Heart right ventricle (tissue), 16 donors: ENCODE measurements at regions of chr2 and their contacts with region 1.

Region 1: DNA sequence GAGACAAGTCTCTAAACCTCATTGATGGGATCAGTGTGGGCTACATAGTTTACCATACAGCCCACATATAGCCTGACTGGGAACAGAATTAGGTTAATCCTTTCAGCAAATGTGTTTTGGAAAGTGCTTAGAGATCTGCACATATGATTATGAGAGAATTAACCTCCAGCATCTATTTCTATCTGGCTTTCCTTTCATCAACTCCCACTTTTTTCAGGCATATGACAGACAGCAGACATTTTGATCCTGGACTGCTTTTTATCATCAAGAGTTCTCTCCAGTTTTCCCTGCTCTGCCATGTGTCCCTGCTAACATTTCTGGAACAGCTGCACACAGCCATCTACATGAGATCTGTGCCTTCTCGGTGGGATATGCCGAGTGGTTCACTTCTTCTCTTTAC is 139.5 kb upstream of the LRP1B start:
- DNase-seq: no peak
- ATAC-seq: no peak
- H3K4me3 ChIP-seq: no peak overlapping the region
- H3K27ac ChIP-seq: no peak overlapping the region
- H3K4me1 ChIP-seq: no peaks in the 10 kb centered on the region
- H3K27me3 ChIP-seq: no peaks in the 10 kb centered on the region
- CTCF ChIP-seq: no peak

Region 2: DNA sequence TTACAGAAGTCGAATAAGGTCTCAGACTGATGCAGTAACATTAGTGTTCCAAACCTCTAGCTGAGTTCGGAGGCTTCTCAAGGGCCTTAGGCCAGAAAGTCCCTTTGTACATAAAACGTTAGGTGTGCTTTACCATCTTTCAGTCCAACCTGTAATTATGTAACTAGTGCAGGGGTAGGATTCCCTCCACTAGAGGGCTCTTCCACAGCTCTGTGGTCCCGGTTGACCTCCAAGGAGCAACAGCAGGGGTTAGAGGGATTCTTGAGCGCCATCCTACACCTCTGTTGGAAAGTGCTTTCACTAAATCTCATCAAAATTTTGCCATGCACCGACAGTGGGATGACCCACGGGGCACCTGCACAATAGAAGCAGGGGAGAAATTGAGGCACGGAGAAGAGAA is 16.3 kb after region 1 on chr2:
- intact Hi-C with region 1: loop called in 1 of 10 experiments (anchors 2 kb)
- DNase-seq: no peak
- ATAC-seq: no peak
- H3K4me3 ChIP-seq: no peak overlapping the region
- H3K27ac ChIP-seq: no peak overlapping the region
- H3K4me1 ChIP-seq: no peaks in the 10 kb centered on the region
- H3K27me3 ChIP-seq: no peaks in the 10 kb centered on the region
- CTCF ChIP-seq: peak in 1 of 9 donors; percentile 8